ENCODE measurements at regions of chr1 and their contacts with region 1.

Region 1: GRCh38 chr1:51768971-51769588 is 109.4 kb downstream of the NRDC start:
- DNase-seq: no peak
- H3K4me3 ChIP-seq: no peak overlapping the region
- H3K27ac ChIP-seq: peak overlapping the region in 1 of 8 donors; percentile 1
- H3K4me1 ChIP-seq: peaks cover 0 to 10% (median 0%) of the 10 kb centered on the region in 6 donors
- H3K27me3 ChIP-seq: no peaks in the 10 kb centered on the region
- CTCF ChIP-seq: peak; percentile 59 to 83 (median 77)
- POLR2A ChIP-seq: no peak

Region 2: GRCh38 chr1:51569284-51570062 is 199.6 kb before region 1 on chr1:
- intact Hi-C with region 1: loop called (anchors 5 kb)
- DNase-seq: no peak
- H3K4me3 ChIP-seq: peak overlapping the region in 1 of 8 donors; percentile 46
- H3K27ac ChIP-seq: peak overlapping the region; percentile 65 to 87 (median 80)
- H3K4me1 ChIP-seq: peaks cover 15 to 42% (median 34%) of the 10 kb centered on the region in 6 donors
- H3K27me3 ChIP-seq: no peaks in the 10 kb centered on the region
- CTCF ChIP-seq: peak in 4 of 11 experiments; percentile 11 to 28 (median 18)
- POLR2A ChIP-seq: no peak

Region 3: GRCh38 chr1:51627678-51628077 is 141.4 kb before region 1 on chr1:
- intact Hi-C with region 1: loop called (anchors 10 kb)
- DNase-seq: no peak
- H3K4me3 ChIP-seq: no peak overlapping the region
- H3K27ac ChIP-seq: no peak overlapping the region
- H3K4me1 ChIP-seq: peaks cover 0 to 61% (median 11%) of the 10 kb centered on the region in 6 donors
- H3K27me3 ChIP-seq: no peaks in the 10 kb centered on the region
- CTCF ChIP-seq: peak in 3 of 11 experiments; percentile 20 to 30 (median 21)
- POLR2A ChIP-seq: no peak

Region 4: DNA sequence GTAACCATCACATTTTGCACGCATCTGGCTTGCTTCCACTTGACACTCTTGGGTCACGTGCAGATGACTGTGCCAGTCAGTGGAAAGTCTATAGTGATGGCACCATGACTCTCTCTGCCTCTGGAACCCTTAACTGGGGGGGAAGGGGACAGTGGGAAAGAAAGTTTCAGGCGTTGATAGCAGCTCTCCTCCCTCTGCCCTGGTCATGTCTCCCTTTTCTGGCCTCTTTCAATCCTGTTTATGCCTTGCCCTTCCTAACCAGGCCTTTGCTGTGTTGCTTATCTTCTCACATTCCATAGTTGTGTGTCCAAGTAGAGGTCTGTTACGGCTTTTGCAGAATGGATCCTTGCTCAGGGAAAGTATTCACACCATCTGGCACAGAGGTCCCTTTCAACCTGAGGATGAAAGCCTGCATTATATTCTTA is 15.9 kb after region 1 on chr1:
- intact Hi-C with region 1: no loop called
- DNase-seq: no peak
- H3K4me3 ChIP-seq: no peak overlapping the region
- H3K27ac ChIP-seq: no peak overlapping the region
- H3K4me1 ChIP-seq: no peaks in the 10 kb centered on the region
- H3K27me3 ChIP-seq: no peaks in the 10 kb centered on the region
- CTCF ChIP-seq: no peak
- POLR2A ChIP-seq: no peak

Region 5: GRCh38 chr1:51829058-51829457 is 60.0 kb after region 1 on chr1:
- intact Hi-C with region 1: no loop called
- DNase-seq: no peak
- H3K4me3 ChIP-seq: no peak overlapping the region
- H3K27ac ChIP-seq: no peak overlapping the region
- H3K4me1 ChIP-seq: no peaks in the 10 kb centered on the region
- H3K27me3 ChIP-seq: no peaks in the 10 kb centered on the region
- CTCF ChIP-seq: no peak
- POLR2A ChIP-seq: no peak